H1 (cell line): ENCODE measurements at regions of chr7 and their contacts with region 1.

Region 1: DNA sequence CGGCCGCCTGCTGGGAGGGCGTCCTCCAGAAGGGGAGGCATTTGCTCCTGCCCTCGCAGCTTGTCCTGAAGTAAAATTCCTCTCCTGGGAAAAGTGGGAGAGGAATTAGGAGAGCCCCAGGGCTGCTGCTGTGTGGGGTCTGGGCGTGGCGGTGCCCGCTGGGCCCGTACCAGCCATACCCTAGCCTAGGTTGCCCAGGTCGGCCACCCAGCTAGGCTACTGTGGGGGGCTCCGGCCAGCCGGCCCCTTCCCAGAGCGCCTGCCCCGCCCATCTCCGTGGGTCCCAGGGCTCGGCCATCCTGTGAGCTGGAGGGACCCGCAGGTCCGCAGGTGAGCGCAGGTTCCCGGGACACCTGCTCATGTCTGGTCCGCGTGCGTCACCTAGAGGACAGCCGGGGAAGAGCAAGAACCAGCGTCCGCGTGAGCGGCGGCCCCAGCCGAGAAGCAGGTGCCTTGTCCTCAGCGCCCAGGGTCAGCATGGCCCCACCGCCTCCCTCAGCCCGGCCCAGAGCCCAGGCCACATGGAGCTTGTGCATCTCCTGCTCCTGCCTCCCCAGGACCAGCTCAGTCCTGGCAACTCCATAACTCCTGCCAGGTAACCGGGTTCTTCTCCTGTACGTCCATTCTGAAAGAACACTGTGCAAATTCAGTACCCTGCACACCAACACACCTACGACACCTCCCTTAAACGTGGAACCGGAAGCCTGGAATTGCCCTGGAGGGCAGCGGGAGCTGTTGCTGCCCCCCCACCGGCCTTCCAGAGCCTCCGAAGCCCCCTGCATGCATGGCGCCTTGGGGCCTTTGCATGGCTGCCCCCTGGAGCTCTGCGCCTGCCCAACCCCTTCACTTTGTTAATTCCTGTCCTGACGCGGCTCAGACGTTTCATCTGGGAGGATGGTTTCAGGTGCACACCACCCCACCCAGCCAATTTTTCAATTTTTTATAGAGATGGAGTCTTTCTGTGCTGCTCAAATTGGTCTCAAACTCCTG is 22.8 kb upstream of the FOXL3 start:
- DNase-seq: peak; percentile 19 to 88
- H3K4me3 ChIP-seq: no peak overlapping the region
- H3K27ac ChIP-seq: no peak overlapping the region
- H3K4me1 ChIP-seq: no peaks in the 10 kb centered on the region
- H3K27me3 ChIP-seq: no peaks in the 10 kb centered on the region; a peak in 1 of 7 replicates
- CTCF ChIP-seq: peak in 2 of 3 experiments; percentile 70 to 88; a peak in 3 of 4 replicates
- EP300 ChIP-seq: no peak
- POLR2A ChIP-seq: no peak
- RAD21 ChIP-seq: peak; percentile 80 to 88

Region 2: GRCh38 chr7:148932-149855 is 118.0 kb before region 1 on chr7:
- CTCF ChIA-PET with region 1: no interaction called
- POLR2A ChIA-PET with region 1: no interaction called
- DNase-seq: peak; percentile 90 to 95
- H3K4me3 ChIP-seq: peak overlapping the region; percentile 56 to 68 (median 63)
- H3K27ac ChIP-seq: peak overlapping the region; percentile 97
- H3K4me1 ChIP-seq: peaks cover 0 to 10% (median 7%) of the 10 kb centered on the region in 4 experiments; a peak in 5 of 7 replicates
- H3K27me3 ChIP-seq: no peaks in the 10 kb centered on the region
- CTCF ChIP-seq: no peak
- EP300 ChIP-seq: no peak
- POLR2A ChIP-seq: peak in 1 of 2 experiments; percentile 96; a peak in 2 of 3 replicates
- RAD21 ChIP-seq: 0 out of 4 replicates have a peak, but pooled peaks of 1 of the 2 experiments have one; percentile 3

Region 3: GRCh38 chr7:253581-254322 is 13.4 kb before region 1 on chr7:
- CTCF ChIA-PET with region 1: interaction called, 10 read pairs
- POLR2A ChIA-PET with region 1: no interaction called
- DNase-seq: no peak
- H3K4me3 ChIP-seq: no peak overlapping the region
- H3K27ac ChIP-seq: no peak overlapping the region
- H3K4me1 ChIP-seq: no peaks in the 10 kb centered on the region
- H3K27me3 ChIP-seq: no peaks in the 10 kb centered on the region
- CTCF ChIP-seq: no peak
- EP300 ChIP-seq: no peak
- POLR2A ChIP-seq: no peak
- RAD21 ChIP-seq: no peak

Region 4: GRCh38 chr7:295155-296154 is 28.3 kb after region 1 on chr7:
- CTCF ChIA-PET with region 1: interaction called, 12 read pairs
- POLR2A ChIA-PET with region 1: no interaction called
- DNase-seq: no peak
- H3K4me3 ChIP-seq: no peak overlapping the region
- H3K27ac ChIP-seq: no peak overlapping the region
- H3K4me1 ChIP-seq: no peaks in the 10 kb centered on the region; a peak in 2 of 7 replicates
- H3K27me3 ChIP-seq: peaks cover 13 to 26% (median 20%) of the 10 kb centered on the region in 4 experiments
- CTCF ChIP-seq: no peak
- EP300 ChIP-seq: no peak
- POLR2A ChIP-seq: no peak
- RAD21 ChIP-seq: no peak

Region 5: GRCh38 chr7:455110-455928 is 188.2 kb after region 1 on chr7:
- CTCF ChIA-PET with region 1: no interaction called
- POLR2A ChIA-PET with region 1: no interaction called
- DNase-seq: no peak
- H3K4me3 ChIP-seq: no peak overlapping the region
- H3K27ac ChIP-seq: no peak overlapping the region
- H3K4me1 ChIP-seq: peaks cover 0 to 31% (median 17%) of the 10 kb centered on the region in 4 experiments; a peak in 6 of 7 replicates
- H3K27me3 ChIP-seq: peaks cover 2 to 19% (median 10%) of the 10 kb centered on the region in 4 experiments; a peak in 5 of 7 replicates
- CTCF ChIP-seq: no peak
- EP300 ChIP-seq: no peak
- POLR2A ChIP-seq: no peak
- RAD21 ChIP-seq: no peak